ENCODE measurements at regions of chr17 and their contacts with region 1.

Region 1: GRCh38 chr17:46046957-46047356 is 47.9 kb downstream of the STH start:
- DNase-seq: no peak
- ATAC-seq: no peak

Region 2: GRCh38 chr17:46002311-46002972 is 44.5 kb before region 1 on chr17:
- intact Hi-C with region 1: no loop called
- DNase-seq: peak; percentile 72
- ATAC-seq: peak; percentile 91

Region 3: DNA sequence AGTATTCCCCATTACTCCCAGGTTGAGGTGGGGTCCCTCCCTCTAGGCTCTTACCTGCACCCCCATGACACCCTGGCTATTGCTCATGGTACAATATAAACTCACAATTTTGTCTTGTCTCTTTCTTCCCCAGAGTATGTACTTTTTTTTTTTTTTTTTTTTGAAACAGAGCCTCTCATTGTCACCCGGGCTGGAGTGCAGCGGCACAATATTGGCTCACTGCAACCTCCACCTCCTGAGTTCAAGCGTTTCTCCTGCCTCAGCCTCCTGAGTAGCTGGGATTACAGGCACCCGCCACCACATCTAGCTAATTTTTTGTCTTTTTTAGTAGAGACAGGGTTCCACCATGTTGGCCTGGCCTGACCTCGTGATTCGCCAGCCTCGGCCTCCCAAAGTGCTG is 137.7 kb after region 1 on chr17:
- intact Hi-C with region 1: loop called (anchors 5 kb)
- DNase-seq: no peak
- ATAC-seq: no peak

Measured in Right ventricle myocardium superior (tissue), 1 donor.